Endothelial cell of umbilical vein (primary cell): ENCODE measurements at regions of chr19 and their contacts with region 1.

Region 1: GRCh38 chr19:4524808-4525562 is 6.7 kb upstream of the PLIN4 start:
- DNase-seq: peak; percentile 31
- H3K4me3 ChIP-seq: no peak overlapping the region
- H3K27ac ChIP-seq: no peak overlapping the region
- H3K4me1 ChIP-seq: no peaks in the 10 kb centered on the region
- H3K27me3 ChIP-seq: no peaks in the 10 kb centered on the region
- CTCF ChIP-seq: peak; percentile 68 to 93
- POLR2A ChIP-seq: no peak

Region 2: GRCh38 chr19:4267101-4267900 is 257.7 kb before region 1 on chr19:
- CTCF ChIA-PET with region 1: interaction called, 98 read pairs
- POLR2A ChIA-PET with region 1: no interaction called
- dilution Hi-C with region 1: no loop called
- intact Hi-C with region 1: no loop called
- DNase-seq: peak; percentile 26
- H3K4me3 ChIP-seq: no peak overlapping the region
- H3K27ac ChIP-seq: no peak overlapping the region
- H3K4me1 ChIP-seq: no peaks in the 10 kb centered on the region
- H3K27me3 ChIP-seq: no peaks in the 10 kb centered on the region
- CTCF ChIP-seq: peak; percentile 66 to 88
- POLR2A ChIP-seq: no peak

Region 3: DNA sequence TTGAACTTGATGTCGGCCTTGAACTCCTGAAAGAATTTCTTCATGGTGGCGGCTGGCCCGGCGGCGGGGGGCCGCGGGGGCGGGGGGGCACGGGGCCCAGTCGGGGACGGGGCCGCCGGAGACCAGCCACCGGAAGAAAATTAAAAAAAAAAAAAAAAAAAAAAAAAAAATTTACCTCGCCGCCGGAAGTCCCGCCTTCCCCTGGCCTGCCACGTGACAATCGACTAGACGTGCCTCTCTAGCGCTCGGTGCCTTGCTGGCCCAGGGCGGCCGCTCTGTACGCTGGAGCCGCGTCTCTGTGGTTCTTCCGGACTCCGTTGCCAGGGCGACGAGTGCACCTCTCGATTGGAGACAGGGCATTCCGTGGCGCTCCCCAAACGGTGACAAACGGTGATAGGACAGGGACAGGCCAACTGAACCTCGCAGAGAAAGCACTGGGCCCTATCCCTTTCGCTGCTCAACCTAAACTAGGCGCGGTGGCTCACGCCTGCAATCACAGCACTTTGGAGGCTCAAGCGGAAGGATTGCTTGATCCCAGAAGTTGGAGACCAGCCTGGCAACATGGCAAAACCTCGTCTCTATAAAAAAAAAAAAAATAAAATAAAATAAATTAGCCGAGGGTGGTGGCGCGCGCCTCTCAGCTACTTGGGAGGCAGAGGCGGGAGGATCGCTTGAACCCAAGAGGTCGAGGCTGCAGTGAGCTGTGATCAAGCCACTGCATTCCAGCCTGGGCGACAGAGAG is 67.2 kb before region 1 on chr19 and contains the start of gene UBXN6:
- CTCF ChIA-PET with region 1: interaction called, 15 read pairs
- POLR2A ChIA-PET with region 1: no interaction called
- dilution Hi-C with region 1: no loop called
- intact Hi-C with region 1: no loop called
- DNase-seq: peak; percentile 96
- H3K4me3 ChIP-seq: peak within 1 kb of the TSS; percentile 62 to 72 (median 69)
- H3K27ac ChIP-seq: peak within 1 kb of the TSS; percentile 43
- H3K4me1 ChIP-seq: peaks cover 14% of the 10 kb centered on the region
- H3K27me3 ChIP-seq: no peaks in the 10 kb centered on the region
- CTCF ChIP-seq: no peak
- POLR2A ChIP-seq: peak; percentile 40
- total RNA-seq, gene UBXN6: 78.5 and 84.5 TPM in 2 replicates

Region 4: GRCh38 chr19:4471403-4472173 is 53.4 kb before region 1 on chr19:
- CTCF ChIA-PET with region 1: interaction called, 13 read pairs
- POLR2A ChIA-PET with region 1: no interaction called
- dilution Hi-C with region 1: no loop called
- intact Hi-C with region 1: no loop called
- DNase-seq: peak; percentile 100
- H3K4me3 ChIP-seq: peak overlapping the region; percentile 18 to 54 (median 34)
- H3K27ac ChIP-seq: peak overlapping the region; percentile 68
- H3K4me1 ChIP-seq: peaks cover 12% of the 10 kb centered on the region
- H3K27me3 ChIP-seq: no peaks in the 10 kb centered on the region
- CTCF ChIP-seq: no peak
- POLR2A ChIP-seq: peak; percentile 54

Region 5: GRCh38 chr19:4505897-4506744 is 18.9 kb before region 1 on chr19:
- CTCF ChIA-PET with region 1: interaction called, 54 read pairs
- POLR2A ChIA-PET with region 1: no interaction called
- dilution Hi-C with region 1: no loop called
- intact Hi-C with region 1: no loop called
- DNase-seq: peak; percentile 69
- H3K4me3 ChIP-seq: no peak overlapping the region
- H3K27ac ChIP-seq: peak overlapping the region; percentile 7
- H3K4me1 ChIP-seq: peaks cover 10% of the 10 kb centered on the region
- H3K27me3 ChIP-seq: no peaks in the 10 kb centered on the region
- CTCF ChIP-seq: no peak
- POLR2A ChIP-seq: no peak

Region 6: DNA sequence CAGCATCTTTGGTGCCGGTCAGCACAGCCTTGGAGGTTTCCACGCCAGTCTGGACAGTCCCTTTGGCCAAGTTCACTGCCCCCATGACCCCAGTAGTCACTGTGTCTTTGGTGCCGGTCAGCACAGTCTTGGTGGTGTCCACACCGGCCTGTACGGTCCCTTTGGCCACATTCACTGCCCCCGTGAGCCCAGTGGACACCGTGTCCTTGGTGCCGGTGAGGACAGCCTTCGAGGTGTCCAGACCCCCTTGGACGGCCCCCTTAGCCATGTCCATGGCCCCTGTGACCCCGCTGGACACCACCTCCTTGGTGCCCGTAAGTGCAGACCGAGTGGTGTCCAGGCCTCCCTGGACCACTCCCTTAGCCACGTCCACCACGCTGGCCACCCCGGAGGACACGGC is 11.7 kb before region 1 on chr19:
- CTCF ChIA-PET with region 1: interaction called, 54 read pairs
- POLR2A ChIA-PET with region 1: no interaction called
- dilution Hi-C with region 1: no loop called
- intact Hi-C with region 1: no loop called
- DNase-seq: no peak
- H3K4me3 ChIP-seq: no peak overlapping the region
- H3K27ac ChIP-seq: no peak overlapping the region
- H3K4me1 ChIP-seq: no peaks in the 10 kb centered on the region
- H3K27me3 ChIP-seq: no peaks in the 10 kb centered on the region
- CTCF ChIP-seq: no peak
- POLR2A ChIP-seq: no peak

Region 7: GRCh38 chr19:4534836-4535658 is 10.1 kb after region 1 on chr19 and contains the start of gene PLIN5:
- CTCF ChIA-PET with region 1: interaction called, 92 read pairs
- POLR2A ChIA-PET with region 1: no interaction called
- dilution Hi-C with region 1: no loop called
- intact Hi-C with region 1: no loop called
- DNase-seq: peak; percentile 48
- H3K4me3 ChIP-seq: no peak within 1 kb of the TSS
- H3K27ac ChIP-seq: no peak within 1 kb of the TSS
- H3K4me1 ChIP-seq: peaks cover 5% of the 10 kb centered on the region
- H3K27me3 ChIP-seq: no peaks in the 10 kb centered on the region
- CTCF ChIP-seq: no peak
- POLR2A ChIP-seq: no peak
- total RNA-seq, gene PLIN5: 0.24 TPM in 1 of 2 replicates, not detected in the other

Region 8: DNA sequence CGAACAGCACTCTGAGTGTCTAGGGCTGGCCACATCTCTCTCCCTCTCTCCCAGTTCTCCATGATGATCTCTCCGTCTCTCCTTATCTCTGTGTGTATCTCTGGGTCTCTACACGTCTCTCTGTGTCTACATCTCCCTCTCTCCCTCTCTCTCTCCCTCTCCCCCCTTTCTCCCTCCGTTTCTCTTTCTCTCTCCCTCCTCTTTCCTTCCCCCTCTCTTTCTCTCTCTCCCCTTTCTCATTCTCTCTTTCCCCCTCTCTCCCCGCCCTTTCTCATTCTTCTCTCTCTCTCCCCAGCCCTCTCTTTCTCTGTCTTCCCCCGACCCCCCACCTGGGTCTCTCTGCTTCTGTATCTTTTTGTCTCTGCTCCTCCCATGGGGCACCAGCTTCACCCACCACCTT is 93.0 kb after region 1 on chr19:
- CTCF ChIA-PET with region 1: no interaction called
- POLR2A ChIA-PET with region 1: no interaction called
- dilution Hi-C with region 1: no loop called
- intact Hi-C with region 1: no loop called
- DNase-seq: no peak
- H3K4me3 ChIP-seq: no peak overlapping the region
- H3K27ac ChIP-seq: no peak overlapping the region
- H3K4me1 ChIP-seq: no peaks in the 10 kb centered on the region
- H3K27me3 ChIP-seq: peaks cover 0 to 5% of the 10 kb centered on the region in 2 experiments
- CTCF ChIP-seq: no peak
- POLR2A ChIP-seq: no peak